Left colon (tissue), 2 donors: ENCODE measurements at regions of chr18 and their contacts with region 1.

Region 1: DNA sequence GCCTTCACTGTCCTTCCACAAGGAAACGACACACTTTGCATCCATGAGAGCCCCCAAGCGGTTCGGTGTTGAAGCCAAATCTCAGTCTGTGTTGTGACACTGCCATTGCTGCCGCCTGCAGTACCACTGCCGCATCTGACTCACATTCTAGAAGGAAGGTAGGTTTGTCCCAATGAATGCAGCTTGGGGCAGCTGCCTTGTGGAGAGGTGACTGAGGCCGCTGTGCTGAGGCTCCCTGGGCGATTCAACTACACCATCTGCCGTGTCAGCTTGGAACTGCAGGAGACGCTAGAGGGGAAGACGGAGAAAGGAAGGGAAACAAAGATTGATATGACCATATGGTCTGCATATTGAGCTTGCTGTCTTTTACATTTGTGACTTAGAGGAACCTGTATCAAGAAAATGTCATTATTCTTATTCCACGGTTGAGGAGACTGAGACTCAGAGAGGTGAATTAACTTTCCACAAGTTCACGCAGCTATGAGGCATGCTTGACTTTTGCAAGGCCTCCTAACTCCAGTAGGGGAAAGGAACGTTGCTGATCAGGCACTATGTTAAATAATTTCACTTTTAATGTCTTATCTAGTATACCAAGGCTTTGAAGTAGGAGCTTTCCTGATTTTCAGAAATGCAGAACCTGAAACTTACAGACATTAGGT is 43.5 kb upstream of the LMAN1 start:
- DNase-seq: peak; percentile 44 to 72
- ATAC-seq: peak; percentile 98

Region 2: DNA sequence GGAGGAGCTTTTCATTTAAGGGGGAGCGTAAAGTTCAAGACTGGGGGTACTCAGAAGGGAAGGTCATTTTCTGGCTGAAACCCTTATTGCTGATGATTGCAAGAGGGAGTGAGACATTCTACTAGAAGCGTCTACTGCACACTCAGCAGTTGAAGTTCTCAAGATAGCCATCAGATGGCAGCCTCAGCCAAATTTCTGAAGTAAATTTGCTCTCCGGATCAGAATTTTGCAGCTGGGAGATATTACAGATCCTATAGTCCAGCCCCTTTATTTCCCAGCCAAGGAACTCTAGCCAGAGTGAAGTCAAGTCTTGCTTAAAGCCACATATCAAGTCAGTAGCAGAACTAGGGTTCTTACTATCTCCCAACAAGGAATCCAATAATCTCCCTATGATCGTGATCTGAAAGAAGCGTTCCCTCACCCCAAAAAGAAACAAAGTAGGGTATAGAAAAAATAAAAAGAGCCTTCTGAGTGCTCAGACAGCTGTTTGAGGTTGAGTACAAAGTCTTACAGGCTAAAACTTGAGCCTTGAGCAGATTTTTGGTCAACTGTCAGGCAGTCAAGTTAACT is 153.3 kb before region 1 on chr18:
- intact Hi-C with region 1: loop called in 1 of 2 experiments (anchors 10 kb)
- DNase-seq: peak in 1 of 2 donors; percentile 29
- ATAC-seq: peak; percentile 49

Region 3: DNA sequence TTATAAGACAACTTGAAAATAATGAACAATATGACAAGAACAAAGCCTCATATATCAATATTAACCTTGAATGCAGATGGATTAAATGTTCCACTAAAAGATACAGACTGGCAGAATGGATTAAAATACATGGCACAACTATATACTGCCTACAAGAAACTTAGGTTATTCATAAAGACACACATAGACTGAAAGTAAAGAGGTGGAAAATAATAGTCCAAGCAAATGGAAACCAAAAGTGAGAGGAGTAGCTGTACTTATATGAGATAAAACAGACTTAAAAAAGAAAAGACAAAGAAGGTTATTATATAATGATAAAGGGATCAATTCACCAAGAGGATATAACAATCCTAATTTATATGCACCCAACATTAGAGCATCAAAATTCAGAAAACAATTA is 61.7 kb before region 1 on chr18:
- intact Hi-C with region 1: no loop called
- DNase-seq: no peak
- ATAC-seq: no peak